ENCODE measurements at regions of chr11 and their contacts with region 1.

Region 1: GRCh38 chr11:117107701-117108590 is 9.7 kb upstream of the SIK3 start:
- DNase-seq: no peak
- H3K4me3 ChIP-seq: no peak overlapping the region
- H3K4me3 Mint-ChIP-seq: no peak overlapping the region
- H3K27ac ChIP-seq: no peak overlapping the region
- H3K27ac Mint-ChIP-seq: no peak overlapping the region
- H3K4me1 ChIP-seq: no peaks in the 10 kb centered on the region
- H3K4me1 Mint-ChIP-seq: peaks cover 0 to 5% (median 4%) of the 10 kb centered on the region in 4 donors
- H3K27me3 ChIP-seq: no peaks in the 10 kb centered on the region
- H3K27me3 Mint-ChIP-seq: no peaks in the 10 kb centered on the region

Region 2: DNA sequence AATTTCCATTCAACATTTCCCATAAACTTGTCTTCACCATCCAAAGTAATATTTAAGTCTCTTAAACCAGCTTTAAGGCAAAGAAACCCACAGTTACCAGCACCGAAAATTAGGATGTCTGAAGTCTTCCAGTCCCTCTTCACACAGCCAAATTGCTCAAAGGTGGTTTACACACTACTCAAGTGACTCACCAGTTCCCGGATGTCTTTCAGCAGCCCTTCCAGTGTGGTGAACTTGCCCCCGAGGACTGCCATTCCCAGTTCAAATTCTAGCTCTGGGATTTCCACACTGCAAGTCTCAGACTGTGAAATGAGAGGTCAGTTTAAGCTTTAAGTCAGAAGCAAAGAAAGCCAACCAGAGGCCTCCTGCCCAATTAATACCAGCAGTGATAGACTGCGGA is 325.2 kb before region 1 on chr11:
- CTCF ChIA-PET with region 1: interaction called, 212 read pairs
- POLR2A ChIA-PET with region 1: interaction called, 4 read pairs
- intact Hi-C with region 1: no loop called
- DNase-seq: no peak
- H3K4me3 ChIP-seq: no peak overlapping the region
- H3K4me3 Mint-ChIP-seq: no peak overlapping the region
- H3K27ac ChIP-seq: no peak overlapping the region
- H3K27ac Mint-ChIP-seq: peak overlapping the region in 4 of 7 donors; percentile 9 to 68 (median 40)
- H3K4me1 ChIP-seq: peaks cover 30% of the 10 kb centered on the region
- H3K4me1 Mint-ChIP-seq: peaks cover 27 to 63% (median 42%) of the 10 kb centered on the region in 4 donors
- H3K27me3 ChIP-seq: no peaks in the 10 kb centered on the region
- H3K27me3 Mint-ChIP-seq: no peaks in the 10 kb centered on the region

Region 3: GRCh38 chr11:116853461-116854073 is 254.4 kb before region 1 on chr11:
- CTCF ChIA-PET with region 1: interaction called, 54 read pairs
- POLR2A ChIA-PET with region 1: interaction called, 3 read pairs
- intact Hi-C with region 1: no loop called
- DNase-seq: peak; percentile 81 to 91 (median 85)
- H3K4me3 ChIP-seq: peak overlapping the region; percentile 8 to 38
- H3K4me3 Mint-ChIP-seq: peak overlapping the region; percentile 53 to 90 (median 77)
- H3K27ac ChIP-seq: peak overlapping the region; percentile 52
- H3K27ac Mint-ChIP-seq: peak overlapping the region; percentile 83 to 98 (median 95)
- H3K4me1 ChIP-seq: peaks cover 81% of the 10 kb centered on the region
- H3K4me1 Mint-ChIP-seq: peaks cover 67 to 84% (median 74%) of the 10 kb centered on the region in 4 donors
- H3K27me3 ChIP-seq: no peaks in the 10 kb centered on the region
- H3K27me3 Mint-ChIP-seq: no peaks in the 10 kb centered on the region

Region 4: DNA sequence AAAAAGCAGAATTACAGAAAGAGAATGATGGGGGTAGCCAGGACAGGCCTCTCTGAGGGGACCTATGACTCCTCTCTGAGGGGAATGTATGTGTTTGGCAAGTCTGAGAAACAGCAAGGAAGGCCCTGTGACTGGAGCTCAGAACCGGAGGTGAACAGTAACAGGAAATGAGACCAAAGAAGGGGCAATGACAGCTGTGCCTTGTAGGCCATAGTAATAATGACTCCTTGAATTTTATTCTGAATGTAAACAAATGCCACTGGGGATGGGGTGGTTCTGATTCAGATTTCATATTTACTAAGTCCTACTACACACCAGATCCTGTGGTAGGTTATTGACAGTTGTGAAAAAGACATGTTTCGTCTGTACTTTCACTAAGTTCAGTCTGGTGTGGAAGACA is 217.8 kb before region 1 on chr11:
- CTCF ChIA-PET with region 1: interaction called, 26 read pairs
- POLR2A ChIA-PET with region 1: no interaction called
- intact Hi-C with region 1: loop called (anchors 1 kb)
- DNase-seq: peak in 3 of 5 donors; percentile 14 to 25 (median 17)
- H3K4me3 ChIP-seq: no peak overlapping the region
- H3K4me3 Mint-ChIP-seq: peak overlapping the region in 6 of 8 donors; percentile 14 to 62 (median 34)
- H3K27ac ChIP-seq: no peak overlapping the region
- H3K27ac Mint-ChIP-seq: peak overlapping the region; percentile 63 to 89 (median 86)
- H3K4me1 ChIP-seq: peaks cover 24% of the 10 kb centered on the region
- H3K4me1 Mint-ChIP-seq: peaks cover 21 to 44% (median 36%) of the 10 kb centered on the region in 4 donors
- H3K27me3 ChIP-seq: no peaks in the 10 kb centered on the region
- H3K27me3 Mint-ChIP-seq: no peaks in the 10 kb centered on the region

Region 5: GRCh38 chr11:116927163-116927974 is 180.6 kb before region 1 on chr11:
- CTCF ChIA-PET with region 1: interaction called, 13 read pairs
- POLR2A ChIA-PET with region 1: interaction called, 3 read pairs
- intact Hi-C with region 1: loop called (anchors 1 kb)
- DNase-seq: peak; percentile 45 to 78 (median 57)
- H3K4me3 ChIP-seq: peak overlapping the region in 1 of 2 donors; percentile 24
- H3K4me3 Mint-ChIP-seq: peak overlapping the region; percentile 47 to 88 (median 74)
- H3K27ac ChIP-seq: peak overlapping the region; percentile 87
- H3K27ac Mint-ChIP-seq: peak overlapping the region; percentile 92 to 99 (median 97)
- H3K4me1 ChIP-seq: peaks cover 93% of the 10 kb centered on the region
- H3K4me1 Mint-ChIP-seq: peaks cover 64 to 91% (median 76%) of the 10 kb centered on the region in 4 donors
- H3K27me3 ChIP-seq: no peaks in the 10 kb centered on the region
- H3K27me3 Mint-ChIP-seq: no peaks in the 10 kb centered on the region

Region 6: GRCh38 chr11:117058761-117059261 is 49.1 kb before region 1 on chr11:
- CTCF ChIA-PET with region 1: no interaction called
- POLR2A ChIA-PET with region 1: no interaction called
- intact Hi-C with region 1: no loop called
- DNase-seq: no peak
- H3K4me3 ChIP-seq: no peak overlapping the region
- H3K4me3 Mint-ChIP-seq: peak overlapping the region in 1 of 8 donors; percentile 53
- H3K27ac ChIP-seq: no peak overlapping the region
- H3K27ac Mint-ChIP-seq: peak overlapping the region in 4 of 7 donors; percentile 39 to 60 (median 48)
- H3K4me1 ChIP-seq: peaks cover 42% of the 10 kb centered on the region
- H3K4me1 Mint-ChIP-seq: peaks cover 55 to 79% (median 63%) of the 10 kb centered on the region in 4 donors
- H3K27me3 ChIP-seq: no peaks in the 10 kb centered on the region
- H3K27me3 Mint-ChIP-seq: no peaks in the 10 kb centered on the region

Region 7: DNA sequence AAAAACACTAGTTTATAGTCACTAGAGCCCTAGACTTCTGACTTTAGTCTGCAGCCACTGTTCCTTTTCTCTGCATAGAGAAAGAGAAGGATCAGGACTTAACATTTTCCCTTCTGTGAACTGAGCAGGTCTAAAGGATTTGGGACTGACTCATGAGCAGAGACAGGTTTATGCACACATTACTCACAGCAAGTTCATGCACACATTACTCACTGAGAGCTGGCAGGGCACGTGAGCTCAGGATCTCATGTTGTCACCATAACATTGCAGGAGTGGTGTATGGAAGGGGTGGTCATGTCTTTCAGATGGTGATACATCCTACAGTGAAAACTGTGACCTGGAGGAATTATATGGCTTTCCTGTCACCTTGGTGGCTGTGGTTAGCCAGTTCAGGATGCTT is 276.1 kb after region 1 on chr11:
- CTCF ChIA-PET with region 1: no interaction called
- POLR2A ChIA-PET with region 1: no interaction called
- intact Hi-C with region 1: no loop called
- DNase-seq: no peak
- H3K4me3 ChIP-seq: no peak overlapping the region
- H3K4me3 Mint-ChIP-seq: no peak overlapping the region
- H3K27ac ChIP-seq: no peak overlapping the region
- H3K27ac Mint-ChIP-seq: no peak overlapping the region
- H3K4me1 ChIP-seq: no peaks in the 10 kb centered on the region
- H3K4me1 Mint-ChIP-seq: peaks cover 0 to under 1% (median 0%) of the 10 kb centered on the region in 4 donors
- H3K27me3 ChIP-seq: no peaks in the 10 kb centered on the region
- H3K27me3 Mint-ChIP-seq: no peaks in the 10 kb centered on the region

Measured in CD4-positive, alpha-beta memory T cell (primary cell).